ENCODE measurements at regions of chr6 and their contacts with region 1.

Region 1: GRCh38 chr6:155406801-155407200 is 48.8 kb downstream of the NOX3 start:
- DNase-seq: no peak
- ATAC-seq: no peak

Region 2: GRCh38 chr6:155264693-155265320 is 142.0 kb before region 1 on chr6:
- intact Hi-C with region 1: no loop called
- DNase-seq: peak; percentile 32
- ATAC-seq: no peak

Region 3: GRCh38 chr6:155340464-155341129 is 66.2 kb before region 1 on chr6:
- intact Hi-C with region 1: loop called (anchors 5 kb)
- DNase-seq: no peak
- ATAC-seq: no peak

Region 4: DNA sequence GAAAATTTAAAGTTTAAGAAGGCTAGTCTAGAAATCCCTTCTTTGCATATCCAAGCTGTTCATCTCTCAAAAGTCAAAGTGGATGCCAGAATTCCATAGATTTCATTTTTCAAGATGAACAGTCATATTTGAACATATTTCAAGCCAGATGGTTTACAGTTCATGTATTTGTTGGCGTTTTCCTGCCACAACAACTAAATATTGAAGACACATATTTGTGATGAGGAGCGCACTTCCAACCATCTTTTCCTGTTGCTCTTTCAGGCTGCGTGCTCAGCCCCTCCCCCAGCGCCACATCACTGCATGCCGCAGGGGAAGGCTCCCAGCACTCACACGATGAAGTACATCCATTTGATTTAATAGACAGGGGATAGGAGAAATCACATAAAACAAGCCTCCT is 54.8 kb after region 1 on chr6:
- intact Hi-C with region 1: no loop called
- DNase-seq: no peak
- ATAC-seq: no peak